Gastrocnemius medialis (tissue), 4 donors: ENCODE measurements at regions of chr5 and their contacts with region 1.

Region 1: DNA sequence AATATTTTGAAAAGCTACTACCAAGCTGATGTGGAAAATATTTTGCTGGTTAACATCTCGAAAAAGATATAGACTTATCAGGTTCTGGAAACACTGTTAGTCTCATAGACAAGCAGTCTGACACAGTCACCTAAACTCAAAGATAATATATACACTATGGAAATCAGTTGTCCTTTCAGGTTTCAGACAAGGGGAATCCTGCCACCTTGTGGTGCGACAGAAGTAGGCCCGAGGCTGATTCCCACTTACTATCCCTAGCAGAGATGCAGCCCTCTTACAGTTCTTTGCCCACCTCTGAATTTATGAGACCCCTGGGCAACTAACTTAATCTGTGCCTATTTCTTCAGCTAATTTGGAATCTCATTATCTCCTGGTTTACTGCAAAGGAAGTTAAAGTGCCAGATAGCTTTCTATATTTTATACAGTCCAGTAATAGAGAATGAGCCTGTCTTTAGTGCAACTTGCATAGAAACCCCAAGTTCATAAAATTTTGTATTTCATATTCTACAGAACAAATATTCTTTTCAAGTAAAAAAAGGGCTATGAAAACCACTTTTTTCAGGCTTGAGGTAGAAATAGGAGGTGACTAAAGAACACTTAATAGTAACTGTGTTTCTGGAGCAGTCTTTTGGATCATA is 16.9 kb downstream of the RAD1 start:
- DNase-seq: peak; percentile 11 to 19
- ATAC-seq: peak in 1 of 2 donors; percentile 44
- H3K4me3 ChIP-seq: no peak overlapping the region
- H3K27ac ChIP-seq: no peak overlapping the region
- H3K4me1 ChIP-seq: no peaks in the 10 kb centered on the region
- H3K27me3 ChIP-seq: no peaks in the 10 kb centered on the region
- CTCF ChIP-seq: peak; percentile 48 to 77 (median 58)
- POLR2A ChIP-seq: no peak

Region 2: GRCh38 chr5:34474573-34475021 is 423.8 kb before region 1 on chr5:
- in situ Hi-C with region 1: loop called in 1 of 4 experiments (anchors 25 kb)
- intact Hi-C with region 1: loop called (anchors 2 kb)
- DNase-seq: no peak
- ATAC-seq: peak; percentile 60 to 62
- H3K4me3 ChIP-seq: no peak overlapping the region
- H3K27ac ChIP-seq: no peak overlapping the region
- H3K4me1 ChIP-seq: no peaks in the 10 kb centered on the region
- H3K27me3 ChIP-seq: no peaks in the 10 kb centered on the region
- CTCF ChIP-seq: peak; percentile 54 to 96 (median 75)
- POLR2A ChIP-seq: no peak

Region 3: DNA sequence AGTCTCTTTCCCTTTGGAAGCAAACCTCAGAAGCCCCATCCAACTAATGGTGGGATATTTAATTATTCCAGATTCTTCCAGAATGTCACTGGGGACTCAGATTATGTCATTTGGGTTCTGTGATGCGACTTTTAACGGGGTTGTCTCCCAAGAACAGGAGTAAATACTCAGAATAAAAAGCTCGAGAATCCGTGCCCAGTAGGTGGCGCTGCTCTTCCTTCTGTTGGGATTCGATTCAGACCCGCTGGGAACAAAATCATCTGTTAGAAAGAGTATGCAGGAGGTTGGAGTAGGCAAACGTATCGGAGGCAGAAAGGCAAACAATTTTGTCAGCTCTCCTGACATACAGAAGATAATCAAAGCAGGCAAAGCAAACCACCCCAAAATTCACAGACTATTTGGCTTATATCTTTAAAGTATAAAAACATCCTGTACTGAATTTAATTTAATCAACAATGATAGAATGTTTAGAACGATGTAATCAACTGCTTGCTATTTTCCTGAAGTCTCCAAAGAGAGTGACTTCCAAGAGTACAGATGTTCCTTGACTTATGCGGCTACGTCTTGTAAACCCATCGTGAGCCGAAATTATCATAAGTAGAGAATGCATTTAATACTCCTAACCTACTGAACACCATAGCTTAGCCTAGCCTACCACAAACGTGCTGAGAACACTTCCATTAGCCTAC is 412.1 kb before region 1 on chr5:
- in situ Hi-C with region 1: loop called in 3 of 4 experiments (anchors 10 to 25 kb)
- intact Hi-C with region 1: loop called (anchors 1 kb)
- DNase-seq: peak; percentile 15 to 50
- ATAC-seq: peak; percentile 60 to 72
- H3K4me3 ChIP-seq: no peak overlapping the region
- H3K27ac ChIP-seq: no peak overlapping the region
- H3K4me1 ChIP-seq: peaks cover 0 to 3% of the 10 kb centered on the region in 2 donors
- H3K27me3 ChIP-seq: no peaks in the 10 kb centered on the region
- CTCF ChIP-seq: peak; percentile 56 to 76 (median 69)
- POLR2A ChIP-seq: no peak

Region 4: DNA sequence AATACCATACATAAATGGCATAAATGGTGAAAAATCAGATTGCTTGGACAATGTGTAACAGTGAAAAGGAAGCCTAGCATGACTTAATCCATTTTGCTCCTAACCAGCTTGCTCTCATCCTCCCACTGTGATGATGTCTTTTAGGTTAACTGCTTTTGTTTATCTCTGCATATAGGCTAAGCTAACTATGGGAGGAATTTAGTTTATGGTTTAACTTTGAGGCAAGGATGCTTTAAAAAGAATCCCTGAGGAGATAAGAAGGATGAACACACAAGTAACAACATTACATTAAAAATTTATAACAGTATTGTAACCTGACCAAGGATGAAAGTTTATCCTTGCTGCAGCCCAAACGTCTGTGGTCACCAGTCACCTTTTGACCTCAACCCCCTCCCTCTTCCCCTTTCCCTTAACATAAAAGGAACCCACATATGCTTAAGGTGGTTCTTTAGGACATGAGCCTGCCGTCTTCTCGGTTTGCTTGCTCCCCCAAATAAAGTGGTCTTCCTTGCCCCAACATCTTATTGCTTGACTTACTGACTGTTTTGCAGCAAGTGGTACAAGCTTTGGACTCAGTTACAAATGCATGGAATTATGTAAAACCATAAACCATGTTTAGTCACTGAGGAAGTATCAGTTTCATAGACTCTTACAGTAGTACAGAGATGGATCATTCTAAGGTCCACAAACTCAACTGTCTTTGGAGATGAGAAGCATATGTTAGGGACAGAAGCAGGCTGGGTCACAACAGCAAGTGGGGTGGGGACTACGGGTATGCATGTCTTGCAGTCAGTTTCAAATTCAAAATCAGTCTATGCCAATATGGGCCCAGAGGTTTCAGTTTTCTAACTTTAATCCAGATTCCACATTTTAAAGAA is 118.0 kb after region 1 on chr5:
- in situ Hi-C with region 1: no loop called
- intact Hi-C with region 1: no loop called
- DNase-seq: no peak
- ATAC-seq: no peak
- H3K4me3 ChIP-seq: no peak overlapping the region
- H3K27ac ChIP-seq: no peak overlapping the region
- H3K4me1 ChIP-seq: peaks cover 0 to 4% of the 10 kb centered on the region in 2 donors
- H3K27me3 ChIP-seq: no peaks in the 10 kb centered on the region
- CTCF ChIP-seq: no peak
- POLR2A ChIP-seq: no peak